Activated CD4-positive, alpha-beta T cell treated with anti-CD3 and anti-CD28 coated beads for 36 hours (primary cell): ENCODE measurements at regions of chr15 and their contacts with region 1.

Region 1: DNA sequence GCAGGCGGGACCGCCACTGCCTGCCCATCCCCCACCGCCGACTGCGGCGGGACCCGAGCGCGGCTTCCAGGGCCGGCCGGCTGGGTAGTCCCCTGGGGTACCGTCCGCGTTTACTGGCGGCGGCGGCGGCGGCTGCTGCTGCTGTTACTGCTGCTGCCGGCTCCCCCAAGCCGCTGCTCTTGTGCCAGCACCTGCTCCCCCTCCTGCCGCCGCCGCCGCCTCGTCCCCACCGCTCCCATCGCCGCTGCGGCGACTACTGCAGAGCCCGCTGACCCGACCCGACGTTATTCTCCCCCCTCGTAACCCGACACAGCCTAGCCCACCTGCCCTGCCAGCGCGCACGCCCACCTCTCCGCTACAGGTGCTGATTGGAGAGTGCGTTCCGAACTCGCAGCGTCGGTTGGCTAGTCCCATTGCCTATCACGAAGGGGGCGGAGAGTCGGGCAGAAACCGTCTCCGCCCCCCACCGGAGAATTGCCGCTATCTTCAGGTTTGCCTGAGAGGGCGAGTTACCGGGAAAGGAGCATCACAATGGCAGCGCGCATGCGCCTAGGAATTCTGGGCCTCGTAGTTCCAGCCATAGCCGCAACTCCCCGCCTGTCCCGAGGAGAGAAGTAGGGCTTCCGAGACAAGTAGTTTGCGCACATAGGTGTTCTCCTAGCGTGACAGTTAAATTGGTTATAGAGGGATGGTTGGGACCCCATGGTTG is at the start of gene TTBK2:
- DNase-seq: peak; percentile 98
- ATAC-seq: peak; percentile 95
- H3K4me3 Mint-ChIP-seq: peak within 1 kb of the TSS; percentile 96
- H3K27ac Mint-ChIP-seq: peak within 1 kb of the TSS; percentile 96
- H3K4me1 Mint-ChIP-seq: peaks cover 26% of the 10 kb centered on the region
- H3K27me3 Mint-ChIP-seq: no peaks in the 10 kb centered on the region
- total RNA-seq, gene TTBK2: 9.7 to 10.5 TPM

Region 2: DNA sequence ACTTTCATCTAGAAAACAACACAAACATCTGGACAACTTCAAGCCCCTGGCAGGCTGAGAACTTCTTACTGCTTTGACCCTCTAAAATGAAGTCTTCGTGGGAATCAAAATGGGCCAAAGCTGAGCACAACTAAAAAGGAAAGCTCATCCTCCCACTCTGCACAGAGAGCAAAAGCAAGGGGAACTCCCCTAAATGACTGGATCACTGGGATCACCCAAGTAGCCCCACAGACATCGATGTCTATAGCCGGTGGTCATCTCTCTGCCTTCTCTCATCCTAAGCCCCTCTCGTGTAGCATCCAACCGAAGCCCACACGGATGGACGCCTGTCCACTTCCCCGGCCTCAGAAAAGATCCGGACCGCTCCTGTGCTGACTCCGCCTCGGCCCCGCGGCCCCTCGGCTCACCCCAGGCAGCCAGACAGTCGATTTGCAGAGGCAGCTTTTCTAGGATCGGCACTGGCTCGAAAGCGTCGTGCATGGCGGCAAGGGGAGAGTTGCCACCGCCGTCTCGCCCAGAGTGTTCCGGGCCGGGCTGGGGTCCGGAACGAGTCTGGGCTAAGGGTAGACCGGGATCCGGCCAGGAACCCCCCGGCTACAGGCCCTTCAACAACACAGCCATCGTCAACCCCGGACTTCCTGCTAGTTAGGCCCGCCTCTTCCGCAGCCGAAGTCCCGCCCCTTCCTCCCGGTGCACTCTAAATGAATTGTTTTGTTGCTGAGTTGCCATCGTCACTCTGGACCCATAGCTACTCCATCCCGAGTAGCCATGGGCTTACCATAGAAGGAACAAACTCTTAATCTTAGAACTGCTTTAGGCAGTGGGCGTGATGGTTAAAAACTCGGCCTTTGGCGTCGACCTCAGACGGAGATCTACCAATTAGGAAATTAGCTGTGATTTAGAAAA is 712.7 kb before region 1 on chr15 and contains the start of gene VPS39:
- CTCF ChIA-PET with region 1: no interaction called
- POLR2A ChIA-PET with region 1: no interaction called
- intact Hi-C with region 1: loop called in 1 of 2 experiments (anchors 5 kb)
- DNase-seq: peak; percentile 91
- ATAC-seq: peak; percentile 98
- H3K4me3 Mint-ChIP-seq: peak within 1 kb of the TSS; percentile 99
- H3K27ac Mint-ChIP-seq: peak within 1 kb of the TSS; percentile 97
- H3K4me1 Mint-ChIP-seq: peaks cover 32% of the 10 kb centered on the region
- H3K27me3 Mint-ChIP-seq: no peaks in the 10 kb centered on the region
- total RNA-seq, gene VPS39: 49.5 to 56.2 TPM

Region 3: DNA sequence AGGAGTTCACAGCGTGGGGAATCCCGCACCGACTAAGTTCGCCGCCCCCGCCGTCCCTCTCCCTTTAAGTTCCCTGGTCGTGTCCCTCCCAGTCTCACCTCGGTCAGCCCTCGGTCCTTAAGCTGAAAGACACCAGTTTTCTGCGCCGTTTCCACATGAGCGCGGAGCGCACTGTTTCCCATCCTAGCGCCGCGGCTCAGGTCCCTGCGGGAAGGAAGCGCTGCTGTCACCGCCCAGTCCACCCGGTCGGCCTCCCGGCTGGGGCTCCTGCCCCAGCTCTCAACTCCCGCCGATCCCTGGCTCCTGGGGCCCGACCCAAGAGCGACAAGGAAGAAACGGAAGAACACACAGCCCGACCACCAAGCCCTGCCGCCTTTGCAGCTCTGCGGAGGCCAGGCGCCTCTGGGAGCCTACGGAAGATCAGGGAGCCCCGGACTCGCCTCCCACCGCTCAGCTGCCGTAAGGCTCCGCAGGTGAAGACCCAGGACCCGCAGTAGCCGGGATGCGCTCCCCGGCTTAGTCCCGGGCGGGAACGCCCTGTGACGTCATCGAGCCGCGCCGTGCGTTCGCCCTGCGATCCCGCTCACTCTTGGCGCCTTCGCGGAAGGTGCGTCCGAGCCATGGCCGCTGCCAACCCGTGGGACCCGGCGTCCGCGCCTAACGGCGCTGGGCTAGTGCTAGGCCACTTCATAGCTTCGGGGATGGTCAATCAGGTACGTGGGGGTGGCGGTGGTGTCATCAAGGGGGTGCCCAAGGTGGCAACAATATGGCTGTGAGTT is 372.2 kb before region 1 on chr15 and contains the starts of genes HAUS2 and LRRC57:
- CTCF ChIA-PET with region 1: interaction called, 4 read pairs
- POLR2A ChIA-PET with region 1: no interaction called
- intact Hi-C with region 1: loop called in 1 of 2 experiments (anchors 10 kb)
- DNase-seq: peak; percentile 93
- ATAC-seq: peak; percentile 89
- H3K4me3 Mint-ChIP-seq: peak within 1 kb of the TSS; percentile 96
- H3K27ac Mint-ChIP-seq: peak within 1 kb of the TSS; percentile 96
- H3K4me1 Mint-ChIP-seq: peaks cover 51% of the 10 kb centered on the region
- H3K27me3 Mint-ChIP-seq: no peaks in the 10 kb centered on the region
- total RNA-seq, gene HAUS2: 46.1 to 55.1 TPM
- total RNA-seq, gene LRRC57: 14.8 to 15.2 TPM

Region 4: GRCh38 chr15:42800731-42801474 is 119.8 kb before region 1 on chr15:
- CTCF ChIA-PET with region 1: interaction called, 19 read pairs
- POLR2A ChIA-PET with region 1: no interaction called
- intact Hi-C with region 1: loop called in 1 of 2 experiments (anchors 5 kb)
- DNase-seq: peak; percentile 31
- ATAC-seq: no peak
- H3K4me3 Mint-ChIP-seq: no peak overlapping the region
- H3K27ac Mint-ChIP-seq: no peak overlapping the region
- H3K4me1 Mint-ChIP-seq: no peaks in the 10 kb centered on the region
- H3K27me3 Mint-ChIP-seq: no peaks in the 10 kb centered on the region

Region 5: DNA sequence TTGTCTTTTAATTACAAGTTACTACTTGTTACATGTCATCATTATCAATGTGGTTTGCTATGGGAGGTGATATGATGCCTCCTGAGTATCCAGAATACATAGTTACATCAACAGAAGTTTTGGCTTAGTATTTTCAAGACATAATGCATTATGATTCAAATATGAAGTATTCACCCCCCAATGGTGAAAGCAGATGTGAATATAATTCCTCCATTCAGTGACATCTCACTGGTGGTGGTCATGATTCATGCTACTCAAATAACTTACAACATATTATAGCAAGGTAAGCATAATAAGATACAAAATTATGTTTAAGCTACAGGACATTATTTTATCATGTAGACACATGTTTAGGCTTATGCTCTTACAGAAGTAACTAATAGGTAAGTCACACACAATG is 34.8 kb after region 1 on chr15:
- CTCF ChIA-PET with region 1: no interaction called
- POLR2A ChIA-PET with region 1: no interaction called
- intact Hi-C with region 1: no loop called
- DNase-seq: no peak
- ATAC-seq: peak; percentile 33
- H3K4me3 Mint-ChIP-seq: no peak overlapping the region
- H3K27ac Mint-ChIP-seq: no peak overlapping the region
- H3K4me1 Mint-ChIP-seq: peaks cover 6% of the 10 kb centered on the region
- H3K27me3 Mint-ChIP-seq: no peaks in the 10 kb centered on the region

Region 6: DNA sequence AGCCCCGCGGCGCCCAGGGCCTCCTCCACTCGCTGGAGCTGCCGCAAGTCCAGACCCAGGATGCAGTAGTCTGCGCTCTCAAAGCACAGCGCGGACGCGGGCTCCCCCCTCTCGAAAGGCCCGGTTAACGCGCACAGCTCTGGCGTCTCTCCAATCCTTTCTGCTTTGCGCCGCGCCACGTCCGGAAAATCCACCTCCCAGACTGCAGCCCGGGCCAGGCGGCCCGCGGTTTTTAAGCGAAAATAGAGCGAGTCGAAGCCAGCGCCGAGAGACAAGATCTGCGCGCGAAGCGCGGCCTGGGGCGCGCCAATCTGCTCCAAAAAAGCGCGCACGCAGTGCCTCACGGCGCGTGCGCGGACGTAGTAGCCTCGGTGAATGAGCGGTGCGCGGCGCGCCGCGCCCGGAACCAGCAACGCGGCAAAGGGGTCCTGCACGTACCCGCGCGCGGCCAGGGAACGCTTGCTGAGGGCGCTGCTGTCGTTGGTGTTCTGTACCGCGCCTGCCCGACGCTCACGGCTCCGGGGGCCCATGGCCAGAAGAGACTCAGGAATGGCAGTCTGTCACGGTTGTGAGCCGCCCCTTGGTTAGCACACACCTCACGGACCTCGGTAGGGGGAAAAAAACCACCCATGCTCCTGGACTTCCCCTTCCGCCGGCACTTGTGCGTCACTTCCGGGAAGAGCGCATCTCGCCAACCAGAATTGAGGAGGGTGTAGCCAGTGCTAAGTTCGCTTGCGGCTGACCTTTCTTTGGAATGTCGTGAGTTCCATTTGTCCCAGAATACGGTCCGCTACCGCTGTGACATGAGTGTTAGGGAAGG is 409.5 kb after region 1 on chr15 and contains the start of gene LCMT2:
- CTCF ChIA-PET with region 1: no interaction called
- POLR2A ChIA-PET with region 1: no interaction called
- intact Hi-C with region 1: loop called in 1 of 2 experiments (anchors 1 kb)
- DNase-seq: peak; percentile 93
- ATAC-seq: peak; percentile 91
- H3K4me3 Mint-ChIP-seq: peak within 1 kb of the TSS; percentile 91
- H3K27ac Mint-ChIP-seq: peak within 1 kb of the TSS; percentile 95
- H3K4me1 Mint-ChIP-seq: peaks cover 32% of the 10 kb centered on the region
- H3K27me3 Mint-ChIP-seq: no peaks in the 10 kb centered on the region
- total RNA-seq, gene LCMT2: 7.6 to 8.5 TPM